ENCODE measurements at regions of chr14 and their contacts with region 1.

Region 1: DNA sequence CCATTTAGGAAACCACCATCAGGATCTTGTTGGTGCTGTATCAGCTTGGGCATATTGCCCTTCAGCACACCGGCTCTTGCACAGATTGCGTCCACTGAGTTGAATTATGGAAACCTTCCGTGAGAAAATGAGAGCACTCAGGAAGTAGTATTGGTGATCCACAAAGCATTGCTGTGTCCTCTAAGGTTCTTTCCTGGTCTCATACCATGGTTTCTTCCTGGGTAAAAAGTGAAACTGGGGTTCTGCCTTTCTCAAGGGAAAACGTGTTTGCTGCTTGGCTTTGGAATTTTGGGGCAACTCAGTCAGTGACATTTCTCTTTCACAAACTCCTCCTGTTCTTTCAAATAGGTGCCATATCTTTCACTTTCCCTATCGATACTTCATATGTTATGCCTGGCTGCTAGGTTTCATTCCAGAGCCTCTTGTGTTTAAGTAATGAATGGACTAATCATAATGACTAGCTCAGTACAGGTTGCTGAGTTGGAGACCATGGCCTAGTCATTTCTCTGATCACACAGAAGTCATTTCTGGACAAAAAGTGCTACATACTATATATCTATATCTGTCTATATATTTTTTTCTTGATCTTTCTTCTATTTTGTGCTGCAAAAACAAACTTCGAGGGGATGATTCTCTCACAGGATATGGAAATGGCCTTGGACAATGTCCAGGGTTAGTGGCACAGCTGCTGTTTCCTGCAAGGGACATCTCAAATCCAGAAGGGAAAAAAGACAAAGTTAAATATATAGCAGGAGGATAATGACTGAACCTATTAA is 423.4 kb downstream of the ZFP36L1 start:
- DNase-seq: no peak
- H3K4me3 Mint-ChIP-seq: no peak overlapping the region
- H3K27ac Mint-ChIP-seq: peak overlapping the region; percentile 21
- H3K4me1 Mint-ChIP-seq: peaks cover 23% of the 10 kb centered on the region
- H3K27me3 Mint-ChIP-seq: no peaks in the 10 kb centered on the region

Region 2: DNA sequence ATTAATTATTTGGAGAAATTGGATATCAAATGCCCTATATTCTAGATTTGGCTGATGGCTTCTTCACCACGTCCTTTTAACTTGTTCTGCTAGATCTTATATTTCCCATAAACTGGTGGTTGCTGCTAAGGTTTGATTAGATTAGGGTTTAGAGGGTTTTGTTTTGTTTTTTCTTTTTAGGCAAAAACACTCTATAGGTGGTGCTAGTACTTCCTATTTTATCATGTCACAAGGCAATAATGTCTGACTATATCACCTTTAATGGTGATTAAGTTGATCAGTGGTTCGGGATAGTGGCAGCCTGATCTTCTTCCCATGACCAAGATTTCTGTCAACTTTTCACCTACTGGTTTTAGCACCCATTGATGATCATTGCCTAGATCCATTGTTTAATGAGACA is 94.7 kb before region 1 on chr14:
- intact Hi-C with region 1: loop called (anchors 2 kb)
- DNase-seq: no peak
- H3K4me3 Mint-ChIP-seq: no peak overlapping the region
- H3K27ac Mint-ChIP-seq: no peak overlapping the region
- H3K4me1 Mint-ChIP-seq: peaks cover 24% of the 10 kb centered on the region
- H3K27me3 Mint-ChIP-seq: no peaks in the 10 kb centered on the region

Region 3: DNA sequence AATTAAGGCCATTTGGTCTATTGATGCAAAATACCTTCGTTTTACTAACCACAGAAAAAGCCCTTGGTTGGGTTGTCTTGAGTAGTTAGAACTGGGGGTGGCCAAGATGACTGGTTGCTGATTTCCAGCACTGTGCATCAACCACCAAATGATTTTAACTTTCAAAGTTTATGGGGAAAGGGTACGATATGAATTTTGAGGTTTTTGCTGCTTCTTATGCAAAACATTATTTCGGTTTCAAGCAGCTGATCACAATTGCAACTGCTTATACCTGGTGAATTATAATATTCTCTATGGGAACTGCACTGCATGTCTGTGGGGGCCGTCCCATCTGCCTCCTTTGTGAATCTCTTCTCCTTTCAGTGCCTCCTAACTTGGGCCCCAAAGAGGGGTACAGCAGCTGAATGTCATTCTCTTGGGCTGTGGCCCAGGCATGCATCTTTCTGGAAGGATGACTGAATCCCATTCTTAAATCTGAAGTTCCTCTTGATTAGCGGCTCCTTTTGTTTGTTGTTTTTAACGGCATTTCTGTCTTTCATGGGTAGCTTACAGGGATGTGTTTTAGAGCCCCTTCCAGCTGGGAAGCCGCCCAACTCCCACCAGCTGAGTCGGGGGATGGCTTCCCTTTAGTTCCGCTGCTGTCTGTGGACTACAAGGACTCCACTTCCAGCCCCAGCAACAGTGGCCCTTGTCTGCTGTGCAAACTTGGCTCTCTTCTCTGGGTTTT is 56.4 kb before region 1 on chr14:
- intact Hi-C with region 1: loop called (anchors 2 kb)
- DNase-seq: no peak
- H3K4me3 Mint-ChIP-seq: no peak overlapping the region
- H3K27ac Mint-ChIP-seq: no peak overlapping the region
- H3K4me1 Mint-ChIP-seq: peaks cover 22% of the 10 kb centered on the region
- H3K27me3 Mint-ChIP-seq: no peaks in the 10 kb centered on the region

Region 4: GRCh38 chr14:68466491-68467032 is 97.1 kb after region 1 on chr14:
- intact Hi-C with region 1: loop called (anchors 2 kb)
- DNase-seq: no peak
- H3K4me3 Mint-ChIP-seq: no peak overlapping the region
- H3K27ac Mint-ChIP-seq: no peak overlapping the region
- H3K4me1 Mint-ChIP-seq: peaks cover 33% of the 10 kb centered on the region
- H3K27me3 Mint-ChIP-seq: no peaks in the 10 kb centered on the region

Region 5: DNA sequence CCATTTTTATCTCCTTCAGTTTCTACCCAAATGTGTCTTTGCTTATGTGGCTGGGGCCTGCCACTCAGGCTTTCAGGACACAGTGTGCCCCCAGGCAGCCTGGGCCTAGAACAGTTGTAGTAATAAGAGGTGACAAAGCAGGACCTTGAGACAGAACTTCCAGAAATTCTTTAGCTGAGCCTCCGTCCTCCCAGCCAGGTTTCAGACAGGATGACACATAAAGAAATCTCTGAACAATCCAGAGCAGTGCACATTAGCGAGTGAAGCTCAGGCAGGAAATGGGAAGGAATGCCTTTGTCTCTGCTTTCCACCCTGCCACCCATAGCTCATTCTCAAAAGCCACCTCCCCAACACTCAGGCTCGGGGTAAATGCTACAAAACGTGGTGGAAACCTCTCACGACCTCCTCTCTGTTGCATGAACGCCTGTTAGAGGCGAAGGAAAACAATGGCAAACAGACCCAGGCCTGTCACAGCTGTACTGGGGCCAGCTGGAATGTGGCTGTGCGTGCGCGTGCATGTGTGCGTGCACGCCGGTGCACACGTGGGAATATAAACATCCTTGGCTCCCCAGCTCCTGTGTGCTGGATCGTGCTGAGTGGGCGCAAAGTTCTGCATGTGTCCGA is 136.7 kb after region 1 on chr14:
- intact Hi-C with region 1: no loop called
- DNase-seq: no peak
- H3K4me3 Mint-ChIP-seq: peak overlapping the region; percentile 34
- H3K27ac Mint-ChIP-seq: peak overlapping the region; percentile 13
- H3K4me1 Mint-ChIP-seq: peaks cover 27% of the 10 kb centered on the region
- H3K27me3 Mint-ChIP-seq: no peaks in the 10 kb centered on the region